Activated naive CD4-positive, alpha-beta T cell treated with anti-CD3 and anti-CD28 coated beads, Interleukin-2, amount 10 ng/mL, durations not matched to agents 7 days and 5 days (primary cell): ENCODE measurements at regions of chr4 and their contacts with region 1.

Region 1: GRCh38 chr4:37452952-37453280 is 208.4 kb downstream of the NWD2 start:
- DNase-seq: peak; percentile 63
- H3K4me3 Mint-ChIP-seq: peak overlapping the region; percentile 57
- H3K27ac Mint-ChIP-seq: no peak overlapping the region
- H3K4me1 Mint-ChIP-seq: peaks cover 15% of the 10 kb centered on the region
- H3K27me3 Mint-ChIP-seq: peaks cover 45% of the 10 kb centered on the region

Region 2: DNA sequence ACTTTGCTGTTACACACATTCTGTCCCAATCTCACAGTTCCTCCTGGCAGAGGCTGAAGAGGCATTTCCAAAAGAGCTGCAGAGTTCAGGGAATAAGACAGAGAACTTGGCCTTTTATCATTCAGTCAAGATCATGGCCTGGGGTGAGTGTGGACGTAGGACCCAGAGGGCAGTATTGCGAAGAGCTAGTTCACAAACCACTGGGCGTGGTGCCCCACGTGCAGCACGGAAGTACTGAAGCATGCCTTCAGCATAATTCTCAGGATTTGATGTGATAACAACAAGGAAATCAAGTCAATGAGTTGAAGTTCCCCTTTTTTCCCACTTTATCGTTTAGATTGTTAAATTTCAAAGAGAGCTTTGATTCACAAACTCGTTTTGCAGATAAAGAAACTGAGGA is 115.6 kb after region 1 on chr4:
- CTCF ChIA-PET with region 1: interaction called, 40 read pairs
- DNase-seq: no peak
- H3K4me3 Mint-ChIP-seq: no peak overlapping the region
- H3K27ac Mint-ChIP-seq: no peak overlapping the region
- H3K4me1 Mint-ChIP-seq: peaks cover 2% of the 10 kb centered on the region
- H3K27me3 Mint-ChIP-seq: no peaks in the 10 kb centered on the region